Activated naive CD4-positive, alpha-beta T cell treated with anti-CD3 and anti-CD28 coated beads for 36 hours (primary cell): ENCODE measurements at regions of chr2 and their contacts with region 1.

Region 1: DNA sequence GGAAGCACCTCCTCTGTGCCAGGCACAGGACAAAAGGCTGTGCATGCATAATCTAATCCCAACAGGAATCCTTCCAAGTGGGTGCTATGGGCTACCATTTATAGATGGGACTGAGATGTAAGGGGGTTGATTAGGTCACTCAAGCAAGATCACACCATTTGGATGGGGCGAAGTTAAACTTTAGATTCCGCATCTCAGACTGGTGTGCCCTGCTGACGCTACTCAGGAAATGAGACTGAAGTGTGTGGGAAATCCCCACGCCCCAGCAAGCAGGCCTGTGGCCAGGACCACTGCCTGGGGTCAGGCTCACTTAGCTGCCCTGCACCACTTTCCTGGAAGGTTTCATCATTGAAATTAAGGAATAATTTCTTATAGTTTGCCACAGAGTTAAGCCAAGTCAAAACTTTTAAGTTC is 70.5 kb upstream of the PPP1CB start:
- DNase-seq: peak; percentile 82
- H3K4me3 Mint-ChIP-seq: peak overlapping the region; percentile 33
- H3K27ac Mint-ChIP-seq: peak overlapping the region; percentile 86
- H3K4me1 Mint-ChIP-seq: peaks cover 35% of the 10 kb centered on the region
- H3K27me3 Mint-ChIP-seq: no peaks in the 10 kb centered on the region

Region 2: GRCh38 chr2:27596627-27597026 is 1084.5 kb before region 1 on chr2:
- CTCF ChIA-PET with region 1: no interaction called
- intact Hi-C with region 1: no loop called
- DNase-seq: no peak
- H3K4me3 Mint-ChIP-seq: no peak overlapping the region
- H3K27ac Mint-ChIP-seq: no peak overlapping the region
- H3K4me1 Mint-ChIP-seq: peaks cover 43% of the 10 kb centered on the region
- H3K27me3 Mint-ChIP-seq: no peaks in the 10 kb centered on the region

Region 3: DNA sequence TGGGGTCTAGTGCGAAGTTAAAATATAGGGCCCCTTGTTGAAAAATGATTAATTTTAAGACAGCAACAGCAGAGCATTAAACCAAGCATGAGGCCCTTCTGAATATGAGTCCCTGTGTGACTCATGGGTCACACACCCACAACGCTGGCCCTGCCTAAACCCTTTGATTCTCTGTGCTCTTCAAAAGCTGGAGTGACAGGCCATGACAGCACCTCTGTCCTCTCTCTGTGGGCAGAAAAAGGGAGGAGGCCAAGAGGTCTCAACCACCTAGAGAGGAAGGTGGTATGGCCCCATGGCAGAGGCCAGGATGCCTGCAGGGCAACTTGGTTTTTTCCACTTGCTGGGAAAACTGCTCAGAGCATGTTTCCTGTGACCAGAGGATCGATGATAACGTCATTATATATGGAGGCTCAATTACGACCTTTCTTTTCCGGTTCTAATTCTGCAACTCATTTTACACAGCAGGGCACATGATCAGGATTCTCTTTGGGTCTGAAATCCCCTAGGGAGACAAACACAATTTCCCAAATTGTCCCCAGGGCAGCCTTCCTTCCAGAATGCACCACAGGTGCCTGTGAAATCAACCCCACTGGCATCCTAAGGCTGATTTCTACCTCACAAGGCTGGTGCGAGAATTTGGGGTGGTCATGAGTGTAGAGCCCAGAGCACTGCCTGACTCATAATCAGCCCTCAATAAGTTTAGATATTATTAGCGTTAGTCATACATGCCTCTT is 31.5 kb before region 1 on chr2:
- CTCF ChIA-PET with region 1: no interaction called
- intact Hi-C with region 1: loop called (anchors 1 kb)
- DNase-seq: peak; percentile 69
- H3K4me3 Mint-ChIP-seq: no peak overlapping the region
- H3K27ac Mint-ChIP-seq: no peak overlapping the region
- H3K4me1 Mint-ChIP-seq: peaks cover 23% of the 10 kb centered on the region
- H3K27me3 Mint-ChIP-seq: no peaks in the 10 kb centered on the region

Region 4: GRCh38 chr2:28656937-28657615 is 24.1 kb before region 1 on chr2:
- CTCF ChIA-PET with region 1: no interaction called
- intact Hi-C with region 1: loop called (anchors 2 kb)
- DNase-seq: peak; percentile 65
- H3K4me3 Mint-ChIP-seq: no peak overlapping the region
- H3K27ac Mint-ChIP-seq: peak overlapping the region; percentile 17
- H3K4me1 Mint-ChIP-seq: peaks cover 27% of the 10 kb centered on the region
- H3K27me3 Mint-ChIP-seq: no peaks in the 10 kb centered on the region

Region 5: GRCh38 chr2:28713577-28714298 is 32.6 kb after region 1 on chr2:
- CTCF ChIA-PET with region 1: no interaction called
- intact Hi-C with region 1: loop called (anchors 1 kb)
- DNase-seq: peak; percentile 42
- H3K4me3 Mint-ChIP-seq: no peak overlapping the region
- H3K27ac Mint-ChIP-seq: peak overlapping the region; percentile 87
- H3K4me1 Mint-ChIP-seq: peaks cover 28% of the 10 kb centered on the region
- H3K27me3 Mint-ChIP-seq: no peaks in the 10 kb centered on the region